ENCODE measurements at regions of chr12 and their contacts with region 1.

Region 1: GRCh38 chr12:66107451-66107915 is 23.1 kb downstream of the LLPH start:
- DNase-seq: peak; percentile 79 to 92
- H3K4me3 ChIP-seq: no peak overlapping the region
- H3K4me3 Mint-ChIP-seq: peak overlapping the region; percentile 47
- H3K27ac Mint-ChIP-seq: no peak overlapping the region
- H3K4me1 ChIP-seq: peaks cover 7% of the 10 kb centered on the region; the same call in 1 of the 2 replicates
- H3K4me1 Mint-ChIP-seq: peaks cover 15% of the 10 kb centered on the region
- H3K27me3 ChIP-seq: no peaks in the 10 kb centered on the region
- H3K27me3 Mint-ChIP-seq: no peaks in the 10 kb centered on the region
- CTCF ChIP-seq: peak; percentile 61 to 80

Region 2: DNA sequence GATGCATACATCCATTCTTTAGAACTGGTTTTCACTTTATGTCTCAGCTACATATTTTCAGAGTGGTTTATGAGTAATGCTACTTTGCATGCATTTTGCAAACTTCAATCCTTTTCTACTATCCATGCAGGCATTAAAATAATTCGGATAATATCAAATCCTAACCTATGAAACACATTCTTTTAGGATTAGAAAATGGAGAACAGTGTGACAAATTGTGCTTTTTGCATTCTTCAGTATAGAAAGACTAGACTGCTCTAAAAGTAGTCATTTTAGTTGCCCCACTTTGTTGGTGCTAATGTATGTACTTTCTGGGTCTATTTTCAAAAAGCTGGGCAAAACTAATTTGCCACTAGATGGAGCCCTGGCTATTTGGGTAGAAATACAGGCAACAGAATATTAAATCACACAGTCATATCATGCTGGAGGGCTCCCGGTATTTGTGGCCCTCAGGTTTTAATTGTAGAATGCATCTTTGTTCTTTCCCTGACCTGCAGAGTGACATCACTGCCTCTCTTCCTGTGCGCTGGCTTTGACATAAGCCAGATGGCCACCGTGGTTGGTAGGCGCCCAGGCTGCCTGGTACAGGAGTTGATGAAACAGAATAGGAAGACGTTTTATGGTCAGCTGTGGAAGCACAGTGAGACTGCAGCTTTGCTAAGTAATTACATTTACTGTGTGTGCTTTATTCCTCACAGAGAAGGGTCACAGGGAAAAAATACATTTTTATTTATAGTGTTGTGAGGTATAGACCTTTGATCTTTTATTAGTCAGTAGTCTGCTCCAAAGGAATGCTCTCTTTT is 800.9 kb before region 1 on chr12:
- CTCF ChIA-PET with region 1: no interaction called
- POLR2A ChIA-PET with region 1: no interaction called
- intact Hi-C with region 1: loop called (anchors 1 kb)
- DNase-seq: peak in 1 of 2 experiments; percentile 52
- H3K4me3 ChIP-seq: peak overlapping the region; percentile 12; the same call in 1 of the 2 replicates
- H3K4me3 Mint-ChIP-seq: peak overlapping the region; percentile 67
- H3K27ac Mint-ChIP-seq: peak overlapping the region; percentile 55
- H3K4me1 ChIP-seq: peaks cover 5% of the 10 kb centered on the region
- H3K4me1 Mint-ChIP-seq: peaks cover 10% of the 10 kb centered on the region
- H3K27me3 ChIP-seq: no peaks in the 10 kb centered on the region
- H3K27me3 Mint-ChIP-seq: no peaks in the 10 kb centered on the region
- CTCF ChIP-seq: peak; percentile 53 to 75

Region 3: DNA sequence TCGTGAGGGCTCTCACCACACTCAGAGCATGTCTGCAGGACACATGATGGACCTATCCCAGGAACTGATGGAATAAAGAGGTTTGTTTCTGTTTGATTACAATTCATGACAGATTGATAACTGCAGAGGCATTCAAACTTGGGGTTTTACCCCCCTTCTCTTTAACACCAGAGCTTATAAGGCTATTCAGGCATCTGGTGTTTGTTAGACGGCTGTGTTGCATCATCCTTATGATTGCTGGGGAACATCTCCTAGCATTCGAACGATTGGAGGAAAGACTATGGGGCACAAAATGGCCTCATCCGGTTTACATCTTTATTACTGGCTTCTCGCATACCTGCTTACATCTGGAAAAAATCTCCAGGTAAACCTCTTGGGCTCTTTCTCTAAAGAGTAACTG is 637.2 kb before region 1 on chr12:
- CTCF ChIA-PET with region 1: no interaction called
- POLR2A ChIA-PET with region 1: no interaction called
- intact Hi-C with region 1: loop called (anchors 10 kb)
- DNase-seq: no peak
- H3K4me3 ChIP-seq: no peak overlapping the region
- H3K4me3 Mint-ChIP-seq: no peak overlapping the region
- H3K27ac Mint-ChIP-seq: no peak overlapping the region
- H3K4me1 ChIP-seq: no peaks in the 10 kb centered on the region
- H3K4me1 Mint-ChIP-seq: no peaks in the 10 kb centered on the region
- H3K27me3 ChIP-seq: no peaks in the 10 kb centered on the region
- H3K27me3 Mint-ChIP-seq: no peaks in the 10 kb centered on the region
- CTCF ChIP-seq: no peak

Region 4: DNA sequence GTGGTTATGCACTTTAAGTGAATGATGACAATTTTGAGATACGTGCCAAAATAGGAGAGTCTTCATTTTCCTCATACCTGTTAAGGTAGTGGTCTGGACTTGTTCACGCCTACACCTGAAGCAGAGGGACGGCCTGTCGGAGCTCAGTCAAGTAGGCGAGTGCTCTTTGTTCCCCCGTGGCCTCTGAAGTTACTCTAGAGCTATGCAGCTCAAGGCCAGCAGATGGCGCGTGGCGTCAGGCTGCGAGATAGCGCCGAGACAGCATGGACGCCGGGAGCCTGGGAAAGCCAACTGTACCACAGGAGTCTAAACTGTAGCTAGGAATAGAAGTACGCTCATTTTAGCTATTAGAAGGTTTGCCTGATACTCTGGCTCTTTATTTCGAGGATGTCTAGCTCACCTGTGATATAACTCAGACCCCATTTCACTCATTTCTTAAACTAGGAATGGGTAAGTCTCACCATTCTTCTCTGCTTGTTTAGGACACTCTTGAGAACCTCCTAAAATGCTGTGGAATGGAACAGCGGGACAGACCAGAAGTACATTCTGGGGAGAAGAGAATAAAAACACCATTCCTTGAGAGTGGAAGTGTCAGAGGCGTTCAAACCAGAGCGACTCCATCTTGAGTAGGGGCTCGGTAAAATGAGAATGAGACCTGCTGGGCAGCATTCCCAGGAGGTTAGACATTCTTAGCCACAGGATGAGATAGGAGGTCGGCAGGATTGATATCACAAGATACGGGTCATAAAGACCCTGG is 550.6 kb before region 1 on chr12:
- CTCF ChIA-PET with region 1: interaction called, 4 read pairs
- POLR2A ChIA-PET with region 1: no interaction called
- intact Hi-C with region 1: loop called (anchors 5 kb)
- DNase-seq: peak; percentile 80 to 82
- H3K4me3 ChIP-seq: no peak overlapping the region
- H3K4me3 Mint-ChIP-seq: no peak overlapping the region
- H3K27ac Mint-ChIP-seq: no peak overlapping the region
- H3K4me1 ChIP-seq: peaks cover 9% of the 10 kb centered on the region
- H3K4me1 Mint-ChIP-seq: no peaks in the 10 kb centered on the region
- H3K27me3 ChIP-seq: no peaks in the 10 kb centered on the region
- H3K27me3 Mint-ChIP-seq: no peaks in the 10 kb centered on the region
- CTCF ChIP-seq: peak; percentile 81 to 85

Region 5: GRCh38 chr12:65602610-65603295 is 504.7 kb before region 1 on chr12:
- CTCF ChIA-PET with region 1: no interaction called
- POLR2A ChIA-PET with region 1: no interaction called
- intact Hi-C with region 1: loop called (anchors 10 kb)
- DNase-seq: peak; percentile 67
- H3K4me3 ChIP-seq: no peak overlapping the region
- H3K4me3 Mint-ChIP-seq: no peak overlapping the region
- H3K27ac Mint-ChIP-seq: no peak overlapping the region
- H3K4me1 ChIP-seq: peaks cover 19% of the 10 kb centered on the region
- H3K4me1 Mint-ChIP-seq: peaks cover 24% of the 10 kb centered on the region
- H3K27me3 ChIP-seq: no peaks in the 10 kb centered on the region
- H3K27me3 Mint-ChIP-seq: no peaks in the 10 kb centered on the region
- CTCF ChIP-seq: peak; percentile 65 to 67

Region 6: DNA sequence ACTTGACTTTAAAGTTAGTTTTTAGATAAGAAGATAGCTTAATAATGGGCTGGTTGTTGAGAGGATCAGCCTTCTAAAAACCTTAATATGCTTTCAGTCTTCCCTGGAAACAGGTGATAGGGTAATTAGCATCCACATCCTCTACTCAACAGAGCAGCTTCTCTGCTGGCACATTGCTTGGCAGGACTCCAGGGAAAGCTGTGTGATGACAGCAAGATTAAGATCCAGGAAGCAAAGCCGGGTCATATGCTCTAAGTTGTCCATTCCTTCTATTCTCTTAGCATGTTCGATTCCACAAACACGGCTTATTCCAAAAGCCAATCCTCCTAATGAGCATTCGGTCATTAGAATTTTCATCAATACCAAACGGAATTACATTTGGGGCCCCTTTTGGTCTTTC is 196.2 kb before region 1 on chr12:
- CTCF ChIA-PET with region 1: no interaction called
- POLR2A ChIA-PET with region 1: no interaction called
- intact Hi-C with region 1: no loop called
- DNase-seq: no peak
- H3K4me3 ChIP-seq: no peak overlapping the region
- H3K4me3 Mint-ChIP-seq: no peak overlapping the region
- H3K27ac Mint-ChIP-seq: no peak overlapping the region
- H3K4me1 ChIP-seq: no peaks in the 10 kb centered on the region
- H3K4me1 Mint-ChIP-seq: no peaks in the 10 kb centered on the region
- H3K27me3 ChIP-seq: no peaks in the 10 kb centered on the region
- H3K27me3 Mint-ChIP-seq: no peaks in the 10 kb centered on the region
- CTCF ChIP-seq: no peak

Region 7: DNA sequence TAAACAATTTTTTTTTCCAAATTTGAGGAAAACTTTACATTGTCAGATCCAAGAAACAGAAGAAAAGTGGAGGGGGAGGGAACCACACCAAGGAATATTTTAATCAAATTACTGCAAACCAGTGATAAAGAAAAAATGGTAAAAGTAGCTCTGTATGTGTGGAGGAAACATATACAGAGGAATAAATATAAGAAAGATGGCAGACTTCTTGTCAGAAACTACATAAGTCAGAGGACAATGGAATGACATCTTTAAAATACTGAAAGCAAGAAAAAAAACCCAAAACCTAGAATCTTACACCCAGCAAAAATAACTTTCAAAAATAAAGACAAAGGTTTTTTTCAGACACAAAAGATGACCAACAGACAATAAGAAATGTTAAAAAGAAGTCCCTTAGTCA is 33.2 kb after region 1 on chr12:
- CTCF ChIA-PET with region 1: no interaction called
- POLR2A ChIA-PET with region 1: no interaction called
- intact Hi-C with region 1: no loop called
- DNase-seq: no peak
- H3K4me3 ChIP-seq: no peak overlapping the region
- H3K4me3 Mint-ChIP-seq: no peak overlapping the region
- H3K27ac Mint-ChIP-seq: no peak overlapping the region
- H3K4me1 ChIP-seq: 0 out of 2 replicates have a peak, but pooled peaks cover 4% of the 10 kb centered on the region
- H3K4me1 Mint-ChIP-seq: no peaks in the 10 kb centered on the region
- H3K27me3 ChIP-seq: no peaks in the 10 kb centered on the region
- H3K27me3 Mint-ChIP-seq: no peaks in the 10 kb centered on the region
- CTCF ChIP-seq: no peak

Region 8: DNA sequence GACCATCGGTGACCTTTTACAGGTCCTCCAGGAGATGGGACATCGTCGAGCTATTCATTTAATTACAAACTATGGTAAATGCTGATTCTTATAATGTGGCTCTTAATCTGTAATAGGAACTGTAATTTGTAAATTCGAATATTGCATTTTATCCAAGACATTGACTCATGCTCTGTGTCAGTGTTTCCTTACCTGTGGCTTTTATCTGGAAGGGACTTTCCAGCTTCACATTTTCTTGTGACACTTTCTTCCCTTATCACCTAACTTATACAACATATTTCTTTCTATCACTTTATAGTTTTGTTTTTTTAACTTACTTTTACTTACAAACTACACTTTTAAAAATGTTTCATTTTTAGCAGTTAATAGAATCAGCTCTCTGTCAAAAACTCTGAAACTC is 96.3 kb after region 1 on chr12:
- CTCF ChIA-PET with region 1: no interaction called
- POLR2A ChIA-PET with region 1: no interaction called
- intact Hi-C with region 1: no loop called
- DNase-seq: no peak
- H3K4me3 ChIP-seq: no peak overlapping the region
- H3K4me3 Mint-ChIP-seq: no peak overlapping the region
- H3K27ac Mint-ChIP-seq: no peak overlapping the region
- H3K4me1 ChIP-seq: peaks cover 4% of the 10 kb centered on the region; the same call in 1 of the 2 replicates
- H3K4me1 Mint-ChIP-seq: no peaks in the 10 kb centered on the region
- H3K27me3 ChIP-seq: no peaks in the 10 kb centered on the region
- H3K27me3 Mint-ChIP-seq: peaks cover 4% of the 10 kb centered on the region
- CTCF ChIP-seq: no peak